ENCODE measurements at regions of chr15 and their contacts with region 1.

Region 1: DNA sequence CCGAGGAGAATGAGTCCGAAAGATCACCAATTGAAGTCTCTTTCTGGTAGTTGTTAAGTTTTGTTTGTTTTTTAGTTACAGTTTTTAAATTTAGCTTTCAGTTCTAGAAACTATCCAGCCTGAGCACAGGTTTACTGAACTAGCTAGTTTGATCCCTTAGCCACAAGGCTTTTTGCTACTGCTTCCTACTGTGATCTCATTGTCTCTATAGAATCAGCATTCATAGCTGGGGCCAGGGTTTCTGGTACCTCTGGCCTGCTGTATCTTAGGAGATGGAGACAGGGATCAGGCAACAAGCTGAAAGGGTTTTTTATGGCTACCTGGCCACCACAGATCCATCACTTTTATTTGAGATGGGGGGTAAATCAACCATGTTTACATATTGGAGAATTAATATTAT is 37.0 kb downstream of the GOLM2 start:
- DNase-seq: no peak
- ATAC-seq: no peak
- H3K4me3 ChIP-seq: no peak overlapping the region
- H3K4me3 Mint-ChIP-seq: no peak overlapping the region
- H3K27ac ChIP-seq: no peak overlapping the region
- H3K27ac Mint-ChIP-seq: no peak overlapping the region
- H3K4me1 ChIP-seq: no peaks in the 10 kb centered on the region
- H3K4me1 Mint-ChIP-seq: no peaks in the 10 kb centered on the region
- H3K27me3 ChIP-seq: no peaks in the 10 kb centered on the region
- H3K27me3 Mint-ChIP-seq: no peaks in the 10 kb centered on the region
- CTCF ChIP-seq: no peak

Region 2: GRCh38 chr15:44173813-44174212 is 151.8 kb before region 1 on chr15:
- intact Hi-C with region 1: no loop called
- DNase-seq: no peak
- ATAC-seq: no peak
- H3K4me3 ChIP-seq: no peak overlapping the region
- H3K4me3 Mint-ChIP-seq: no peak overlapping the region
- H3K27ac ChIP-seq: no peak overlapping the region
- H3K27ac Mint-ChIP-seq: no peak overlapping the region
- H3K4me1 ChIP-seq: no peaks in the 10 kb centered on the region
- H3K4me1 Mint-ChIP-seq: no peaks in the 10 kb centered on the region
- H3K27me3 ChIP-seq: peaks cover 12% of the 10 kb centered on the region
- H3K27me3 Mint-ChIP-seq: peaks cover 14 to 18% of the 10 kb centered on the region in 2 donors
- CTCF ChIP-seq: no peak

Region 3: GRCh38 chr15:44275150-44275830 is 50.3 kb before region 1 on chr15:
- intact Hi-C with region 1: no loop called
- DNase-seq: no peak
- ATAC-seq: no peak
- H3K4me3 ChIP-seq: no peak overlapping the region
- H3K4me3 Mint-ChIP-seq: no peak overlapping the region
- H3K27ac ChIP-seq: no peak overlapping the region
- H3K27ac Mint-ChIP-seq: no peak overlapping the region
- H3K4me1 ChIP-seq: no peaks in the 10 kb centered on the region
- H3K4me1 Mint-ChIP-seq: no peaks in the 10 kb centered on the region
- H3K27me3 ChIP-seq: peaks cover 2% of the 10 kb centered on the region
- H3K27me3 Mint-ChIP-seq: peaks cover 12 to 20% of the 10 kb centered on the region in 2 donors
- CTCF ChIP-seq: no peak

Region 4: GRCh38 chr15:44489464-44489863 is 163.9 kb after region 1 on chr15:
- intact Hi-C with region 1: loop called (anchors 10 kb)
- DNase-seq: no peak
- ATAC-seq: peak in 1 of 3 donors; percentile 58
- H3K4me3 ChIP-seq: no peak overlapping the region
- H3K4me3 Mint-ChIP-seq: no peak overlapping the region
- H3K27ac ChIP-seq: no peak overlapping the region
- H3K27ac Mint-ChIP-seq: peak overlapping the region; percentile 16 to 17
- H3K4me1 ChIP-seq: no peaks in the 10 kb centered on the region
- H3K4me1 Mint-ChIP-seq: peaks cover 6 to 13% of the 10 kb centered on the region in 2 donors
- H3K27me3 ChIP-seq: no peaks in the 10 kb centered on the region
- H3K27me3 Mint-ChIP-seq: no peaks in the 10 kb centered on the region
- CTCF ChIP-seq: no peak